ENCODE measurements at regions of chr4 and their contacts with region 1.

Region 1: GRCh38 chr4:38396845-38397547 is 267.0 kb upstream of the KLF3 start:
- DNase-seq: no peak
- ATAC-seq: no peak
- H3K4me3 ChIP-seq: no peak overlapping the region
- H3K4me3 Mint-ChIP-seq: no peak overlapping the region
- H3K27ac ChIP-seq: no peak overlapping the region
- H3K27ac Mint-ChIP-seq: peak overlapping the region in 2 of 9 donors; percentile 32 to 89
- H3K4me1 ChIP-seq: no peaks in the 10 kb centered on the region
- H3K4me1 Mint-ChIP-seq: peaks cover 0 to 6% (median 0%) of the 10 kb centered on the region in 7 donors
- H3K27me3 ChIP-seq: no peaks in the 10 kb centered on the region
- H3K27me3 Mint-ChIP-seq: peaks cover 0 to 2% (median 0%) of the 10 kb centered on the region in 5 donors

Region 2: GRCh38 chr4:38381788-38382187 is 15.2 kb before region 1 on chr4:
- CTCF ChIA-PET with region 1: no interaction called
- POLR2A ChIA-PET with region 1: no interaction called
- intact Hi-C with region 1: no loop called
- DNase-seq: no peak
- ATAC-seq: no peak
- H3K4me3 ChIP-seq: no peak overlapping the region
- H3K4me3 Mint-ChIP-seq: no peak overlapping the region
- H3K27ac ChIP-seq: no peak overlapping the region
- H3K27ac Mint-ChIP-seq: peak overlapping the region in 1 of 9 donors; percentile 25
- H3K4me1 ChIP-seq: peaks cover 0 to 16% of the 10 kb centered on the region in 2 donors
- H3K4me1 Mint-ChIP-seq: peaks cover 0 to 45% (median 33%) of the 10 kb centered on the region in 7 donors
- H3K27me3 ChIP-seq: no peaks in the 10 kb centered on the region
- H3K27me3 Mint-ChIP-seq: peaks cover 0 to 14% (median 0%) of the 10 kb centered on the region in 5 donors

Region 3: DNA sequence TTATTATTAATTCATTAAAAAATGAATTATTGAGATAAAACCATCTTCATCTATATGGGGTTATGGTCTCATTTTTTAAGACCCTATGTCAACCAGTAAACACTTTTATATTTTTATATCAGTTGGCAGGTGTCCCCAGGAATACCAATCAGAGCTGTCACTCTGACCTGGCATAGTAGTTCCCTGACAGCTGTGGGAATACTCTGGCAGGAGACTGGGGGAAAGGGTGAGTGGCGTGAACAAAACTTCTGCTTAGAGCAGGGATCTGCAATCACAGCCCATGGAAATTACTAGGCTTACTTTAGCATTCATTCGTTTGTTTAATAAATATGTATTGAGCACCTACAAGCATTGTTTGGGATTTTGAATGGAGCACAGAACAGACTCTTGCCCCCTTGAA is 12.9 kb after region 1 on chr4:
- CTCF ChIA-PET with region 1: no interaction called
- POLR2A ChIA-PET with region 1: no interaction called
- intact Hi-C with region 1: loop called in 1 of 2 experiments (anchors 2 kb)
- DNase-seq: no peak
- ATAC-seq: no peak
- H3K4me3 ChIP-seq: no peak overlapping the region
- H3K4me3 Mint-ChIP-seq: no peak overlapping the region
- H3K27ac ChIP-seq: no peak overlapping the region
- H3K27ac Mint-ChIP-seq: no peak overlapping the region
- H3K4me1 ChIP-seq: no peaks in the 10 kb centered on the region
- H3K4me1 Mint-ChIP-seq: peaks cover 0 to 17% (median 12%) of the 10 kb centered on the region in 7 donors
- H3K27me3 ChIP-seq: no peaks in the 10 kb centered on the region
- H3K27me3 Mint-ChIP-seq: peaks cover 0 to 6% (median 0%) of the 10 kb centered on the region in 5 donors

Measured in naive thymus-derived CD4-positive, alpha-beta T cell (primary cell).